Heart right ventricle (tissue), 16 donors: ENCODE measurements at regions of chr5 and their contacts with region 1.

Region 1: DNA sequence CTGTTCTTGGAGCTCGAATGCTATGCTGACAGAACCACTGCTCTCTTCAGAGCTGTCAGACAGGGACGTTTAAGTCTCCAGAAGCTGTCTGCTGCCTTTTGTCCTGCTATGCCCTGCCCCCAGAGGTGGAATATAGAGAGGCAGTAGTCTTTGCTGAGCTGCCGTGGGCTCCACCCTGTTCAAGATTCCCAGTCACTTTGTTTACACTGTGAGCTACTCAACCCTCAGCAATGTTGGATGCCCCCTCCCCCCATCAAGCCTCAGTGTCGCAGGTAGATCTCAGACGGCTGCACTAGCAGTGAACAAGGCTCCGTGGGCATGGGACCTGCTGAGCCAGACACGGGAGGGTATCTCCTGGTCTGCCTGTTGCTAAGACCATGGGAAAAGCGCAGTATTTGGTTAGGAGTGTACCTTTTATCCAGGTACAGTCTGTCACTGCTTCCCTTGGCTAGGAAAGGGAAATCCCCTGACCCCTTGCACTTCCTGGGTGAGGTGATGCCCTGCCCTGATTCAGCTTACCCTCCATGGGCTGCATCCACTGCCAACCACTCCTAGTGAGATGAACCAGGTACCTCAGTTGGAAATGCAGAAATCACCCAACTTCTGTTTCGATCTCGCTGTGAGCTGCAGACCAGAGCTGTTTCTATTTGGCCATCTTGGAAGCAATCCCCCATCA is 344.1 kb downstream of the TMEM161B start:
- DNase-seq: no peak
- ATAC-seq: no peak
- H3K4me3 ChIP-seq: no peak overlapping the region
- H3K27ac ChIP-seq: no peak overlapping the region
- H3K4me1 ChIP-seq: no peaks in the 10 kb centered on the region
- H3K27me3 ChIP-seq: no peaks in the 10 kb centered on the region
- CTCF ChIP-seq: no peak

Region 2: DNA sequence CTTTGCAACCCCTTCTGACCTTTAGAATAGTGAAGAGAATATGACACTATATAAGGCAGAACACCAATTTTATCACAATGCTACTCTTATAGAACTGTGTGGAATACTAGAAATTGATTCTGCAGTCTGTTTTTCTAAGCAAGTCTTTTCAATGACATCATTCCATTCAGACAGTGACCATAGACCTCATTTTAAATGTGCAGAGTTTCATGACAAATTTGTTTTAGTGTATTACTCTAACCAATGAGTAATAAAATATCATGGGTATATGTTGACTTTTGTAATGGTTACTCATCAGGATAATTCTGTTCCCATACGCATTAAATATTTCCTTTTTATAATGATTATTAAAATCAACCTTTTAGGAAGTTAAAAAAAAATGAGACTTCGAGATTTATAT is 1087.0 kb before region 1 on chr5:
- intact Hi-C with region 1: no loop called
- DNase-seq: no peak
- ATAC-seq: no peak
- H3K4me3 ChIP-seq: no peak overlapping the region
- H3K27ac ChIP-seq: no peak overlapping the region
- H3K4me1 ChIP-seq: no peaks in the 10 kb centered on the region
- H3K27me3 ChIP-seq: no peaks in the 10 kb centered on the region
- CTCF ChIP-seq: no peak

Region 3: GRCh38 chr5:87885758-87886157 is 38.8 kb before region 1 on chr5:
- intact Hi-C with region 1: no loop called
- DNase-seq: no peak
- ATAC-seq: no peak
- H3K4me3 ChIP-seq: no peak overlapping the region
- H3K27ac ChIP-seq: no peak overlapping the region
- H3K4me1 ChIP-seq: no peaks in the 10 kb centered on the region
- H3K27me3 ChIP-seq: no peaks in the 10 kb centered on the region
- CTCF ChIP-seq: no peak

Region 4: DNA sequence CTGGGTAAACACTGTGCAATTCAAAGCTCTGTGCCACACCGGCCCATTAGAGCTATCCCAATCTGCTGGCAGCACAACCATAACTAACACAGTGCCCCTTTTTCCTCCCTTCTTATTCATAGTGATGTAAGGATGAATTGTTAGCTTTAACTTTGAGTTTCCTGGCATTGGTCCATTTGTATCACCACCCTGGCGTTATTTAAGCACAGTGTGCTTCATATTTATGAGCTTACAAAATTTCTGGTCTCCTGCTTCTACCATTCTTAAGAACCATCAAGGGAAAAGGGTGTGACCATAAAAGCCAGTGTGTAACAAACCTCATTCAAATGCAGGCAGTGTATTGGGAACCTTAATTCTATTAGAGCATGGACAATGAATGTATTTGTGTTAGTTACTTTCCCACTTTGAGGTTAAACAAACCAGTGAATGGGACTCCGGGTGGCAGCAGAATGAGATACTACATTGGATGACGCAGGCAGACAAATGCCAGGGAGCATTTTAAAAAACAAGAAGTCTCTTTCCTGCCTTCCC is 121.4 kb after region 1 on chr5:
- intact Hi-C with region 1: no loop called
- DNase-seq: no peak
- ATAC-seq: no peak
- H3K4me3 ChIP-seq: no peak overlapping the region
- H3K27ac ChIP-seq: no peak overlapping the region
- H3K4me1 ChIP-seq: no peaks in the 10 kb centered on the region
- H3K27me3 ChIP-seq: no peaks in the 10 kb centered on the region
- CTCF ChIP-seq: no peak

Region 5: GRCh38 chr5:88109818-88110217 is 185.2 kb after region 1 on chr5:
- intact Hi-C with region 1: loop called in 1 of 10 experiments (anchors 10 kb)
- DNase-seq: no peak
- ATAC-seq: no peak
- H3K4me3 ChIP-seq: no peak overlapping the region
- H3K27ac ChIP-seq: no peak overlapping the region
- H3K4me1 ChIP-seq: no peaks in the 10 kb centered on the region
- H3K27me3 ChIP-seq: peaks cover 0 to 6% (median 0%) of the 10 kb centered on the region in 7 donors
- CTCF ChIP-seq: no peak